Esophagus squamous epithelium (tissue), 5 donors: ENCODE measurements at regions of chr6 and their contacts with region 1.

Region 1: GRCh38 chr6:137637121-137637520 is 142.9 kb upstream of the OLIG3 start:
- DNase-seq: no peak
- H3K4me3 ChIP-seq: no peak overlapping the region
- H3K27ac ChIP-seq: no peak overlapping the region
- H3K4me1 ChIP-seq: peaks cover 0 to 10% (median 5%) of the 10 kb centered on the region in 3 donors
- H3K27me3 ChIP-seq: no peaks in the 10 kb centered on the region
- CTCF ChIP-seq: no peak
- POLR2A ChIP-seq: no peak

Region 2: DNA sequence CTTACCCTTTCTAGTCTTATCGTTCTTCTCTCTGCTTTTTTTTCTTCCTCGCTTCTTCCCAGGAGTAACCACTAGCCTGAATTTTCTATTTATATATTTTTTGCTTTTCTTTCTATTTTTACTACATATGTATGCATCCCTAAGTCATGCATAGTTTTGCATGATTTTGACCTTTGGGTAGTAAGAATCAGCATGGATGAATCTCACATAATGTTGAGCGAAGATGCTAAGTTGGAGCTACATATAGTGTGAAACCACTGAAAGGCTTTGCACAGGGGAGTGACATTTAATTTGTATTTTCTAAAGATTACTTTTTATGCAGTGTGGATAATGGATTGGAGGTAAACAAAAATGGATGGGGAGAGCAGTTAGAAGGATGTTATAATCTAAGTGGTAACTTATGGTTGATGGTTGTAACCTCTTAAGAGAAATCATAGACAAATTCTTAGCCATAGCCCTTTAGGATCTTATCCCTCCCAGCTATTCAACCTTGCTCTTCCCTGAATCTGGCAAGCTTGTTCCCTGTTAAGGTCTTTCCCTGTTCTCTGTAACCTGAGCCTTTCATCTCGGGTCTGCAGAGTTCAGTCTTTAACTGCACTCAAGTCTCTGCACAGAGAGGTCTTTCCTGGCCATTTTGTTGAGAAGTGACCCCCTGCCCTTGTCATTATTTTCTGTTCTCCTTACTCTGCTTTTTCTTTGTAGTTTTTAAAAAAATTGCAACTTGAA is 796.7 kb before region 1 on chr6:
- intact Hi-C with region 1: no loop called
- DNase-seq: no peak
- H3K4me3 ChIP-seq: no peak overlapping the region
- H3K27ac ChIP-seq: no peak overlapping the region
- H3K4me1 ChIP-seq: peaks cover 0 to 3% (median 0%) of the 10 kb centered on the region in 3 donors
- H3K27me3 ChIP-seq: no peaks in the 10 kb centered on the region
- CTCF ChIP-seq: no peak
- POLR2A ChIP-seq: no peak

Region 3: GRCh38 chr6:137076277-137077068 is 560.6 kb before region 1 on chr6:
- intact Hi-C with region 1: loop called (anchors 10 kb)
- DNase-seq: no peak
- H3K4me3 ChIP-seq: no peak overlapping the region
- H3K27ac ChIP-seq: no peak overlapping the region
- H3K4me1 ChIP-seq: no peaks in the 10 kb centered on the region
- H3K27me3 ChIP-seq: no peaks in the 10 kb centered on the region
- CTCF ChIP-seq: peak in 5 of 6 experiments; percentile 67 to 87 (median 70)
- POLR2A ChIP-seq: no peak

Region 4: DNA sequence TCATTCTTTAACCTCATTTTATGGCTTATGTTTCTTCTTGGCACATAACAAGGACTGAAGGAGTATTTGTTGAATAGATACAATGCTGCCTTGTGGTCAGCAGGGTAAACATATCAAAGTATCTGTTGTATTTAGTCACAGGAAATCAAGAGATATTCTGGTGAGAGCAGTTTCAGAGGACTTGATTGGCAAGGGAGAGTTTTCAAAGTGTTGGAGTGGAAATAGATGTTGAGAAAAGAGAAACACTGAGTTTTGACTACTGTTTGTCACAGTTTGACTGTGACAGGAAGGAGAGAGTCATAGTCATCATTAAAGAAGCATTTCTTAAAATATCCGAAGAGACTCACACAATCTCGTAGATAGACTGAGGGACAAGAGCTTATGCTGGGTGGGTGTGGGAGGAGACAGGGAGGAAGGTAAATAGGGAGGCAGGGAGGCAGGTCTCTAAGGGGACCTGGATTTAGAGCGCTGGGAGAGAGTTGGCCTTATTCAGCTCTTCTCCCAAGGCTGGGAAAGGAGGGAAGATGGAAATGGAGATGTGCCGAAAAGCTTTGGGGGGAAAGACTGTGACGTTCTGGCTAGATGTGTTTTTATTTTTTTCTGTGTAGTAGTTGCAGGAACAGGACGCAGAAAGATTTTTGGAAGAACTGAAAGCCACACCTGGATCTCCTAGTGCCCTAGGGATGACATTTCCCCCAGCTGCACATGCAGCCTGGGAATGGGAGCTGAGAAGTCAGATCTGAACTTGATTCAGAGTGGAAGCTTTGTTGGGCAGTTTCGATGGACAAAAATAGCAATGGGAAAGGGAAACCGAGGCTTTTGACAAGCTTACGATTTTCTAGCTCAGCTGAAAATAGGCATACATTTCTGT is 352.9 kb before region 1 on chr6:
- intact Hi-C with region 1: loop called (anchors 10 kb)
- DNase-seq: no peak
- H3K4me3 ChIP-seq: no peak overlapping the region
- H3K27ac ChIP-seq: no peak overlapping the region
- H3K4me1 ChIP-seq: no peaks in the 10 kb centered on the region
- H3K27me3 ChIP-seq: no peaks in the 10 kb centered on the region
- CTCF ChIP-seq: no peak
- POLR2A ChIP-seq: no peak